A673 (cell line): ENCODE measurements at regions of chr2 and their contacts with region 1.

Region 1: DNA sequence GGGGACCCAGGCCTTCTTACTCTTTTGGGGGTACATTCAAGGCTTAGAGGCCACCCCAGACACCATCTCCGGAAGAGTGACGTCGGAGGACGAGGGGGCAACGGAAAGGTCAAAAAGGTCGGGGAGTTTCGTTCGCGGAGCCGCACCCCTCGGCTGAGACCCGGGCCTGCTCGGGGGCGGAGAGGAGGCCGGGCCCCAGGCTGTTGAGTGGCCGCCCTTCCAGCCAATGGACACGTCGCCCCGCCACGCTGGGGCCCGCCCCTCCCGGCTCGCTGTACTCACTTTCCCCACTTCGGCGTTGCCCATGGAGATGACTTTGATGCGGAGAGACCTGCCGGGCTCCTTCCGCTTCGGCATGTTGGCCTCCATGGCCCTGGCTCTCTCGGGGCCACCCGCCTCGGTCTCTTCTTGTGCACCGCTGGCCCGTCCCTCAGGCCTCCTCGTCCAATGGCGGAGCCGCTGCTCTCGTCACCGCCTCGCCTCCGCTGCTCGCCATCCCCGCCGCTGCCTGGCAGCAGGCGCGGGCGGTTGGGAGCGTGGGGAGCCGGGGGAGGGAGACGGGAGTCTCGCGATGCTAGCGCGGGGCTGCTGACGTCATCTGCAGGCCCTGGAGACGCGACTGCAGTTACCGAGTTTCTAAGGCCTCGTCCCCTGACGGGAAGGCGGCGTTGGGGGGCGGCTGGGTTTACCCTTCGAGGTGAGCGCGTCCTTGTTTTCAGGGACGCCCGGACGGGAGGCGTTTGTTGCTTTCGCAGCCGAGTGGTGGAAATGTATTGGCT is at the start of gene DNAJC27:
- DNase-seq: peak; percentile 99
- H3K4me3 ChIP-seq: peak within 1 kb of the TSS; percentile 66
- H3K27ac ChIP-seq: peak within 1 kb of the TSS; percentile 97
- H3K4me1 ChIP-seq: peaks cover 5% of the 10 kb centered on the region
- H3K27me3 ChIP-seq: no peaks in the 10 kb centered on the region
- CTCF ChIP-seq: no peak
- total RNA-seq, gene DNAJC27: 4.4 and 6.7 TPM in 2 replicates

Region 2: GRCh38 chr2:24421668-24422067 is 550.1 kb before region 1 on chr2:
- CTCF ChIA-PET with region 1: no interaction called
- POLR2A ChIA-PET with region 1: no interaction called
- intact Hi-C with region 1: loop called (anchors 5 kb)
- DNase-seq: peak; percentile 84
- H3K4me3 ChIP-seq: no peak overlapping the region
- H3K27ac ChIP-seq: no peak overlapping the region
- H3K4me1 ChIP-seq: peaks cover 5% of the 10 kb centered on the region
- H3K27me3 ChIP-seq: no peaks in the 10 kb centered on the region
- CTCF ChIP-seq: peak; percentile 85

Region 3: DNA sequence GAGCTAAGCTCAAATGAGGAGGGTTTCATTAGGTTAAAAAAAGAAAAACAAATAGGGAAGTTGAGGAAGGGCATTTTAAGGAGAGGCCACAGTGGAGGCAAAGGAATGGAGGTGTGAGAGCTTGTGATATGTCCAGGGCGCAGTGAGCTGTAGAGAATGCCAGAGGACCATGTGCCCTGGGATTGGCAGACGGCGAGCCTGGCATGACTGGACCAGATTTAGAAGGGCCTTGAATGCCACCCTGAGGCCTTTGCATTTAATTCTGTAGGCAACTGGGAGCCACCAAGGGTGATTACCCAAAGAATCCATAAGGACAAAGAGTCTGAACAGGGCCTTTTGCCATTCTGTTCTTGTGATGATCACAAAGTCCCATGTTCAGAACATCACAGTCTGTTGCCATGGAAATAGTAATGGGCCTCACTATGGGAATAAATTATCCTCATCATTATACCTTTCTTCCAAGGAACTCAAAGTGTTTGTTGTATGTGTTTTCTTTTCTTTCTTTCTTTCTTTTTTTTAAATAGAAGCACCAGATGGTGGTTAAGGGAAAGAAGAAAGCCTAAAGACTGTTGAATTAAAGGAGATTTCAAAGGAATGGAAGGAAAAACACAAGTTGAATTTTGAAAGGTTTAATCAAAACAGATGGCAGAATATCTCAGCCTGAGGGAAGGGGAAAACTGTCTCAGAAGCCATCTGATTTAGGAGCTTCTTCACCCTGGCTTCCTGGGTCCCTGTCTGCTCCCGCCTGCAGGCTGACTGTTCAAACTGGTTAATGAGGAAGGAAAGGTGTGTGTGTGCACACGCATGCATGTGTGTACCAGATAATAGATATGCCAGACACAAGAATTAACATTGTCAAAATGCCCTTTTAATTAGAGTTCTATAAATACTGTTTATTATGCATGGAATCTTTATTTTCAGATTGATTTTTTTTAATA is 512.2 kb before region 1 on chr2:
- CTCF ChIA-PET with region 1: no interaction called
- POLR2A ChIA-PET with region 1: interaction called, 14 read pairs
- intact Hi-C with region 1: no loop called
- DNase-seq: no peak
- H3K4me3 ChIP-seq: no peak overlapping the region
- H3K27ac ChIP-seq: no peak overlapping the region
- H3K4me1 ChIP-seq: peaks cover 3% of the 10 kb centered on the region
- H3K27me3 ChIP-seq: no peaks in the 10 kb centered on the region
- CTCF ChIP-seq: no peak

Region 4: GRCh38 chr2:24855726-24856125 is 116.0 kb before region 1 on chr2:
- CTCF ChIA-PET with region 1: no interaction called
- POLR2A ChIA-PET with region 1: interaction called, 15 read pairs
- intact Hi-C with region 1: no loop called
- DNase-seq: peak; percentile 58
- H3K4me3 ChIP-seq: no peak overlapping the region
- H3K27ac ChIP-seq: no peak overlapping the region
- H3K4me1 ChIP-seq: no peaks in the 10 kb centered on the region
- H3K27me3 ChIP-seq: no peaks in the 10 kb centered on the region
- CTCF ChIP-seq: no peak

Region 5: DNA sequence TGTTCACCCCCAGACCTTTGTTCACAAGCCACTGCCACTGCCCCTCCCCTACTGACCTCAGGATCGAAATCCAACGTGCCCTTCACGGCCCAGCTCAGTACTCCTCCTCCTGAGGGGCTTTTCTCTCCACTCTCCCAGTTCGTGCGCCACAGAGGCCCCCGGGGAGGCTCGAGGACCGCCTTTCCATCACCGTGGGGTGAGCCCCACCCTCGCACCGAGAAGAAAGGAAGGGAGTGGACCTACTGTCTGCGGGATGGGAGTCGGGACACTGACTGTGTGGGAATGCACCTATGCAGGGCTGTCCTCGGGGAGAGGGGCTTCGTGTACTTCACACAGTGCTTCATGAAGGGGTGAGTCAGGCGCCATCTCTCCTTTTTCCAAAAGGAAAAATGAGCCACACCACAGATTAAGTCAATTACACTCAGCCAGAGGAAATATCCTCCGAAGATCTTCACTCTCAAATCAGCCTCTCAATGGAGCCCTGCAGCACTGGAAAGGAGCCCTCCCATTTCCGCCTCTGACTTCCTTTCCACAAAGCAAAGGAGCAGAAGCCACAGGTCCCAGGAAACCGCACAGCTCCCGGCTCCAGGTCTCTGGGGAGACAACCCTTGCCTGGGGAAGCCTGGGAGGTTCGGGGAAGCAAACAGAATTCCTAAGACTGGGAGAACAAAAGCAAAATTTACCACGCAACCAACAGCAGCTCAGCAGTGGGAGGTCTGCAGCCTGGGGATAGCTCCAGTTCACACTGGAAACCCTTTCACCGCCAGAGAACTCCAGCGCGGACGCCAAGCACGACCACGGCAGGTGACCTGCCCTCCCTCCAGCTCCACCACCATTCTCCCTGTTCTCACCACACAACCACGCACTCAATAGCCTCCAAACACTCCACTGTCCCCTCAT is 73.4 kb before region 1 on chr2:
- CTCF ChIA-PET with region 1: no interaction called
- POLR2A ChIA-PET with region 1: no interaction called
- intact Hi-C with region 1: no loop called
- DNase-seq: no peak
- H3K4me3 ChIP-seq: no peak overlapping the region
- H3K27ac ChIP-seq: no peak overlapping the region
- H3K4me1 ChIP-seq: no peaks in the 10 kb centered on the region
- H3K27me3 ChIP-seq: no peaks in the 10 kb centered on the region
- CTCF ChIP-seq: no peak

Region 6: GRCh38 chr2:25131567-25132298 is 160.0 kb after region 1 on chr2:
- CTCF ChIA-PET with region 1: interaction called, 65 read pairs
- POLR2A ChIA-PET with region 1: no interaction called
- intact Hi-C with region 1: loop called (anchors 1 kb)
- DNase-seq: no peak
- H3K4me3 ChIP-seq: no peak overlapping the region
- H3K27ac ChIP-seq: no peak overlapping the region
- H3K4me1 ChIP-seq: no peaks in the 10 kb centered on the region
- H3K27me3 ChIP-seq: peaks cover 28% of the 10 kb centered on the region
- CTCF ChIP-seq: no peak

Region 7: DNA sequence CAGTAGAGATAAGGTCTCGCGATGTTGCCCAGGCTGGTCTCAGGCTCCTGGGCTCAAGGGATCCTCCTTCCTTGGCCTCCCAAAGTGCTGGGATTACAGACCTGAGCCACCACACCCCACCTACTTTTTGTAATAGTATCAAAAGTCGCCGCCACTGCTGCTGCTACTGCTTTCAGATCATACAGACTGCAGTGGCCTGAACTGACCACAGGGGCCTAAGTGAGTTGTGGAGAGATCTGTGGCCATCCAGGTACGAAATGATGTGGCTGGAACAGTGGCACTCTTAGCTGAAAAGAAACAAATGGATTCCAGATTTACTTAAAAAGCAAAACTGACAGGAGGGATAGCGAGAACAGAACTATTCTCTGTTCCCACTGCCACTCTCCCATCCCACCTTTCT is 229.5 kb after region 1 on chr2:
- CTCF ChIA-PET with region 1: interaction called, 7 read pairs
- POLR2A ChIA-PET with region 1: no interaction called
- intact Hi-C with region 1: loop called (anchors 2 kb)
- DNase-seq: no peak
- H3K4me3 ChIP-seq: no peak overlapping the region
- H3K27ac ChIP-seq: no peak overlapping the region
- H3K4me1 ChIP-seq: no peaks in the 10 kb centered on the region
- H3K27me3 ChIP-seq: no peaks in the 10 kb centered on the region
- CTCF ChIP-seq: no peak